B cell (primary cell): ENCODE measurements at regions of chr10 and their contacts with region 1.

Region 1: GRCh38 chr10:62038609-62039190 is 137.2 kb downstream of the ARID5B start:
- DNase-seq: peak; percentile 85
- ATAC-seq: peak; percentile 63
- H3K4me3 ChIP-seq: peak overlapping the region in 3 of 5 experiments; percentile 19 to 50 (median 27)
- H3K4me3 Mint-ChIP-seq: peak overlapping the region; percentile 74
- H3K27ac ChIP-seq: peak overlapping the region; percentile 59 to 84
- H3K27ac Mint-ChIP-seq: peak overlapping the region; percentile 87
- H3K4me1 ChIP-seq: peaks cover 74 to 81% of the 10 kb centered on the region in 2 donors
- H3K4me1 Mint-ChIP-seq: peaks cover 83% of the 10 kb centered on the region
- H3K27me3 ChIP-seq: no peaks in the 10 kb centered on the region
- H3K27me3 Mint-ChIP-seq: no peaks in the 10 kb centered on the region
- CTCF ChIP-seq: peak; percentile 89

Region 2: GRCh38 chr10:61600389-61600788 is 438.3 kb before region 1 on chr10:
- CTCF ChIA-PET with region 1: no interaction called
- POLR2A ChIA-PET with region 1: no interaction called
- intact Hi-C with region 1: no loop called
- DNase-seq: no peak
- ATAC-seq: no peak
- H3K4me3 ChIP-seq: no peak overlapping the region
- H3K4me3 Mint-ChIP-seq: no peak overlapping the region
- H3K27ac ChIP-seq: no peak overlapping the region
- H3K27ac Mint-ChIP-seq: no peak overlapping the region
- H3K4me1 ChIP-seq: no peaks in the 10 kb centered on the region
- H3K4me1 Mint-ChIP-seq: no peaks in the 10 kb centered on the region
- H3K27me3 ChIP-seq: peaks cover 0 to 1% (median 0%) of the 10 kb centered on the region in 4 experiments
- H3K27me3 Mint-ChIP-seq: peaks cover 24% of the 10 kb centered on the region
- CTCF ChIP-seq: no peak

Region 3: GRCh38 chr10:61721431-61721830 is 317.3 kb before region 1 on chr10:
- CTCF ChIA-PET with region 1: no interaction called
- POLR2A ChIA-PET with region 1: no interaction called
- intact Hi-C with region 1: no loop called
- DNase-seq: no peak
- ATAC-seq: no peak
- H3K4me3 ChIP-seq: no peak overlapping the region
- H3K4me3 Mint-ChIP-seq: no peak overlapping the region
- H3K27ac ChIP-seq: no peak overlapping the region
- H3K27ac Mint-ChIP-seq: no peak overlapping the region
- H3K4me1 ChIP-seq: no peaks in the 10 kb centered on the region
- H3K4me1 Mint-ChIP-seq: no peaks in the 10 kb centered on the region
- H3K27me3 ChIP-seq: no peaks in the 10 kb centered on the region
- H3K27me3 Mint-ChIP-seq: peaks cover 23% of the 10 kb centered on the region
- CTCF ChIP-seq: no peak

Region 4: DNA sequence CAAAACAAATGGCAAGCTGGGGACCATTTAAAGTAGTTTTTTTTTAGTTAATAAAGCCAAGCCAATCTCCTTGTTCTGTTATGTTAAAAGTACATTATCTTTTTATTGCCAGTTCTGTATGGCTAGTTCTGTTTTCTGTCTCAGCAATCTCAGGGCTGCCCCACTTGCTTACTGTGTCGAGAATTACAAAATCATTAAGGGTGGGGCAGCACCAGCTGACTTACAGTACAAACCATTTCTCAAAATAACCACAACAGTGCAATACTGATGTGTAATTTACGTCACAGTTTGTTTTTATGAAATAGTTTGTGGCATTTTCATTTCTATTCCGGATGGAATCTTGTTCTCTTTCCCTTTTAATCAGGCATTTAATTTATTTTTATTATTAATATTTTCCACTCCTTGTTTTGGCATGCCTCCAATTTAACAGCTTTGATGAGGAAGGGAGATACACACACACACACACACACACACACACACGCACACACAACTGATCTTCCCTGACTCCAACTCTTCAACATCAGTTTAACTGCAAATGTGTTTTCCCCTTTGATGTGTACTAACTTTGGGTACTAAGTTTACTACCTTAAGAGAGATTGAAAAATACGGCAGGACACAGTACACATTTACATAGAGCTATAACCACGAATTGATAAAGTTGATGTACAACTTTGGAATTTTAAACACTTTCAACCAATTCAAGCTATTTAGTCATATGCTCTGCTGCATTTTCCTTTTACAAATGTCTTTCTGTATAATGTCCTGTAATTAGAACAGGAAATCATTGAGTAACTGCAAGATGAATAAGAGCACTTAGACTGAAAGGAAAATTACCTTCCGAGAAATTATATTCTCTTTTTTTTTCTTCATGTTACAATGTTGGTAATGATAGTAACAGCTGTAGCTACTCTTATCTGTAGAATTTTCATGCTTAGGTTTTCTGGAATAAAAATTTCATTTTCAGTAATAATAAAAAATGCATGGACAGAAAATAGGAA is 45.7 kb before region 1 on chr10:
- CTCF ChIA-PET with region 1: interaction called, 18 read pairs
- POLR2A ChIA-PET with region 1: interaction called, 4 read pairs
- intact Hi-C with region 1: no loop called
- DNase-seq: peak; percentile 86
- ATAC-seq: peak; percentile 77
- H3K4me3 ChIP-seq: peak overlapping the region in 1 of 5 experiments; percentile 42
- H3K4me3 Mint-ChIP-seq: peak overlapping the region; percentile 73
- H3K27ac ChIP-seq: peak overlapping the region; percentile 74 to 80
- H3K27ac Mint-ChIP-seq: peak overlapping the region; percentile 92
- H3K4me1 ChIP-seq: peaks cover 48 to 58% of the 10 kb centered on the region in 2 donors
- H3K4me1 Mint-ChIP-seq: peaks cover 85% of the 10 kb centered on the region
- H3K27me3 ChIP-seq: no peaks in the 10 kb centered on the region
- H3K27me3 Mint-ChIP-seq: no peaks in the 10 kb centered on the region
- CTCF ChIP-seq: no peak

Region 5: DNA sequence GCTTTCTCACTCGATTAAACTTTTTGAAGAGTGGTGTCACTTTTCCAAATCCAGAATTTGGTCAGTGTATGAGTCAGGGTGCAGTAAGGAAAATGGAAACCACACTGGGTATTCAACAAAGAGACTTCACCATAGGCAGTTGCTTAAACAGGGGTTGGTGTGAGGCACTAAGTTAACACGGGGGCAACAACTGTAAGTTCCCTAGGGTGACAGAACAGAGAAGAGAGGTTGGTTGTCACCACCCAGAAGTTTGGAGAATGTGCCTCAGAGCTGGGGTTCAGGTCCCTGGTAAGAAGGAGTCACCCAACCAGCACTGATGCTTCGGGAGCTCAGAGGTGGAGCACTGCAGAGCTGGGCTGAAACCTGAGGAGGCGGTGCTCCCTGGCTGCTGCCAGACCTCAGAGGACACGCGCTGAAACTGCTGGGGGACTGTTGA is 33.2 kb after region 1 on chr10:
- CTCF ChIA-PET with region 1: interaction called, 10 read pairs
- POLR2A ChIA-PET with region 1: no interaction called
- intact Hi-C with region 1: no loop called
- DNase-seq: no peak
- ATAC-seq: no peak
- H3K4me3 ChIP-seq: no peak overlapping the region
- H3K4me3 Mint-ChIP-seq: no peak overlapping the region
- H3K27ac ChIP-seq: peak overlapping the region in 1 of 2 donors; percentile 14
- H3K27ac Mint-ChIP-seq: peak overlapping the region; percentile 65
- H3K4me1 ChIP-seq: peaks cover 4 to 11% of the 10 kb centered on the region in 2 donors
- H3K4me1 Mint-ChIP-seq: peaks cover 58% of the 10 kb centered on the region
- H3K27me3 ChIP-seq: no peaks in the 10 kb centered on the region
- H3K27me3 Mint-ChIP-seq: no peaks in the 10 kb centered on the region
- CTCF ChIP-seq: no peak

Region 6: DNA sequence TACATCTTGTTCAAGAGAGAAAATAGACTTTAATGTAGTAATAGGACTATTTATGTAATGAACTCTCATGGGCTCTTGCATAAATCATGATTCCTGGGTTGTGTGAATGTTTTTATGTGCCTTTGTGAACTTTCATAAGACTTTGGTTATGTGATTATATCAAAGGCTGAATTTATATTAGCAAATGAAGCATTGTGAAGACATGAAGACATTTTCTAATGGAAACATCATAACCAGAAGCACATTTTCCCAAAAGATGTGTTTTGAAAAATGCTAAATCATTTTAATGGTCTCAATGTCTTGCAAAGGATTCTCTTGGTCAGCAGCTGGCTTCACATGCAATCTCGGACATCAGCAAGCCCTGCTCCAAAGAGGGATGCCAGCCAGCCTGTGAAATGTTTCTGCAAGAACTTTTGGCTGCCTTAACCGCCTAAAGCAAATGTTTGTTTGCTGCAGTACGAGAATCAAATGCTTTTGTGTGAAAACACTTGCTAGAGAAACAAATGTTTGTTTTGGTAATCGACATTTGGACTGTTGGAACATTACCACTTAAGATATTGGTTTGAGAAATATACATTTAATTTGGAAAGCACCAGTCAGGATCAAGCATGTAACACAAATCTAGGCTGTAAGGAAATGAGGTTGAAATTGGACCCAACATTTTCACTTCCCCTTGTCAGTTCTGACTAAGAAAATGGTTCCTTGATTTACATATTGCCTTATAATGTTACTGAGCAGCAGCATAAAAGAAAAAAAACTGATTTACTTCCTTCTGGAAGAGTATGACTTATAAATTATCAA is 127.8 kb after region 1 on chr10:
- CTCF ChIA-PET with region 1: no interaction called
- POLR2A ChIA-PET with region 1: no interaction called
- intact Hi-C with region 1: loop called (anchors 2 kb)
- DNase-seq: peak; percentile 72
- ATAC-seq: peak; percentile 92
- H3K4me3 ChIP-seq: peak overlapping the region in 1 of 5 experiments; percentile 34
- H3K4me3 Mint-ChIP-seq: peak overlapping the region; percentile 1
- H3K27ac ChIP-seq: peak overlapping the region in 1 of 2 donors; percentile 4
- H3K27ac Mint-ChIP-seq: peak overlapping the region; percentile 59
- H3K4me1 ChIP-seq: peaks cover 25 to 28% of the 10 kb centered on the region in 2 donors
- H3K4me1 Mint-ChIP-seq: peaks cover 29% of the 10 kb centered on the region
- H3K27me3 ChIP-seq: no peaks in the 10 kb centered on the region
- H3K27me3 Mint-ChIP-seq: no peaks in the 10 kb centered on the region
- CTCF ChIP-seq: no peak